ENCODE measurements at regions of chr1 and their contacts with region 1.

Region 1: DNA sequence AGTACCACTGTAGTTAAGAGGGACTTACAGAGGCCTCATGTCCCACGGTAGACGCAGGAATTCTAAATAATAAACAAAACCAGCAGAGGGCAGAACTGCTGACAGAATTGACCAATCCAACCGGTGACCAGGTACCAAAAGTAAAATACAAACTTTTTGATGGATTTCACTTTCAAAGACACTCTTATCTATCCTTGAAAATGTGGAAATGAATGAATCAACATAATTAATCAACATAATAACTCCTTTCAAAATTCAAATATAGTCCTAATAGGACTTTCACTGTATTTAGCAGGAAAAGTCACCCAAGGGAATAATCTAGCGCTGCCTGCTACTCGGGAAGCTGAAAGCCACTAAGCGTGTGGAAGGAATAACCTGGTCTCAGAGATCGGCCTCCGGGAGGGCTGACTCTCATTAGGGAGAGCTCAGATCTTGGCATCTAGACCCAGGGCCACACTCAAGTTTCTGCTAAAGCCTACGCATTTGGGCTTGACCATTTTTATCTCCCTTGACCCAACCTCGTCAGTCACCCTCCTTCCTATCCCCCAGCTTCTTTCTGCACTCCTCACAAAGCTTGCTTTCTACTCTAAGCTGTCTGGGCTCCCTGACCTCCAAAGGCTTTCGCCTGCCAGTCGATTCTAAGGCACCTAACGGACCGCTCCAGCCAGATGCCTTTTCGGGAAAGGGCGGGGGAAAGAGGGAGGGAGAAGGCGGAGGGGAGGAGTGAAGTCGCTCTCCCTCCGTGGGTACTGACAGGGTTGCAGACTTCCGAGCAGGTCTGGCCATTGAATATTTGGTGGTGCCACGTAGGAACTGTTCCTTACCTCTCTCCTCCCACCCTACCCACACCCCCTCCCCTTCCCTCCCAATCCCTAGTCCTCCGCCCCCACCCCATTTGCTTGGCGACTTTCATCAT is 1.6 kb downstream of the COL11A1 start:
- ATAC-seq: peak; percentile 50 to 89 (median 70)
- H3K4me3 ChIP-seq: peak overlapping the region; percentile 28 to 35 (median 34)
- H3K27ac ChIP-seq: no peak overlapping the region
- H3K4me1 ChIP-seq: peaks cover 0 to 3% of the 10 kb centered on the region in 2 donors

Region 2: GRCh38 chr1:101816262-101816661 is 1290.4 kb before region 1 on chr1:
- in situ Hi-C with region 1: no loop called
- ATAC-seq: no peak
- H3K4me3 ChIP-seq: no peak overlapping the region
- H3K27ac ChIP-seq: no peak overlapping the region
- H3K4me1 ChIP-seq: peaks cover 0 to 15% of the 10 kb centered on the region in 2 donors

Region 3: GRCh38 chr1:103220631-103221041 is 114.0 kb after region 1 on chr1:
- in situ Hi-C with region 1: loop called in 1 of 9 experiments (anchors 25 kb)
- ATAC-seq: peak in 3 of 8 experiments; percentile 15 to 89 (median 56)
- H3K4me3 ChIP-seq: no peak overlapping the region
- H3K27ac ChIP-seq: no peak overlapping the region
- H3K4me1 ChIP-seq: no peaks in the 10 kb centered on the region

Region 4: GRCh38 chr1:103448560-103448959 is 341.9 kb after region 1 on chr1:
- in situ Hi-C with region 1: loop called in 1 of 9 experiments (anchors 25 kb)
- ATAC-seq: no peak
- H3K4me3 ChIP-seq: no peak overlapping the region
- H3K27ac ChIP-seq: no peak overlapping the region
- H3K4me1 ChIP-seq: no peaks in the 10 kb centered on the region

Measured in motor neuron (in vitro differentiated cells).